ENCODE measurements at regions of chr2 and their contacts with region 1.

Region 1: GRCh38 chr2:28377984-28378678 is 14.5 kb upstream of the FOSL2 start:
- DNase-seq: peak in 2 of 3 donors; percentile 62 to 65
- H3K4me3 ChIP-seq: peak overlapping the region in 2 of 7 experiments; percentile 33 to 45
- H3K27ac ChIP-seq: no peak overlapping the region
- H3K4me1 ChIP-seq: peaks cover 30 to 83% (median 67%) of the 10 kb centered on the region in 4 experiments
- H3K27me3 ChIP-seq: no peaks in the 10 kb centered on the region

Region 2: GRCh38 chr2:28346587-28346986 is 31.5 kb before region 1 on chr2:
- CTCF ChIA-PET with region 1: interaction called, 10 read pairs
- POLR2A ChIA-PET with region 1: interaction called, 5 read pairs
- DNase-seq: no peak
- H3K4me3 ChIP-seq: no peak overlapping the region
- H3K27ac ChIP-seq: no peak overlapping the region
- H3K4me1 ChIP-seq: peaks cover 3 to 21% (median 15%) of the 10 kb centered on the region in 4 experiments
- H3K27me3 ChIP-seq: no peaks in the 10 kb centered on the region

Region 3: GRCh38 chr2:28356095-28356911 is 21.8 kb before region 1 on chr2:
- CTCF ChIA-PET with region 1: interaction called, 253 read pairs
- POLR2A ChIA-PET with region 1: interaction called, 5 read pairs
- DNase-seq: peak; percentile 79 to 88 (median 85)
- H3K4me3 ChIP-seq: no peak overlapping the region
- H3K27ac ChIP-seq: peak overlapping the region in 1 of 2 experiments; percentile 50
- H3K4me1 ChIP-seq: peaks cover 2 to 54% (median 48%) of the 10 kb centered on the region in 4 experiments
- H3K27me3 ChIP-seq: no peaks in the 10 kb centered on the region

Region 4: GRCh38 chr2:28366496-28367282 is 11.4 kb before region 1 on chr2:
- CTCF ChIA-PET with region 1: interaction called, 253 read pairs
- POLR2A ChIA-PET with region 1: interaction called, 37 read pairs
- DNase-seq: peak; percentile 95 to 98 (median 97)
- H3K4me3 ChIP-seq: peak overlapping the region in 4 of 7 experiments; percentile 28 to 59 (median 36)
- H3K27ac ChIP-seq: peak overlapping the region in 1 of 2 experiments; percentile 65
- H3K4me1 ChIP-seq: peaks cover 0 to 82% (median 76%) of the 10 kb centered on the region in 4 experiments
- H3K27me3 ChIP-seq: no peaks in the 10 kb centered on the region

Region 5: GRCh38 chr2:28392297-28393113 is 14.4 kb after region 1 on chr2 and contains the start of gene FOSL2:
- CTCF ChIA-PET with region 1: interaction called, 61 read pairs
- POLR2A ChIA-PET with region 1: interaction called, 12 read pairs
- DNase-seq: peak; percentile 99 to 100 (median 99)
- H3K4me3 ChIP-seq: peak within 1 kb of the TSS; percentile 79 to 93 (median 91)
- H3K27ac ChIP-seq: peak within 1 kb of the TSS; percentile 86 to 92
- H3K4me1 ChIP-seq: peaks cover 16 to 61% (median 56%) of the 10 kb centered on the region in 4 experiments
- H3K27me3 ChIP-seq: no peaks in the 10 kb centered on the region